ENCODE measurements at regions of chr6 and their contacts with region 1.

Region 1: GRCh38 chr6:33711140-33712129 is at the start of gene UQCC2:
- DNase-seq: peak; percentile 98
- H3K4me3 Mint-ChIP-seq: peak within 1 kb of the TSS; percentile 96
- H3K27ac Mint-ChIP-seq: peak within 1 kb of the TSS; percentile 94
- H3K4me1 Mint-ChIP-seq: peaks cover 26% of the 10 kb centered on the region
- H3K27me3 Mint-ChIP-seq: no peaks in the 10 kb centered on the region
- total RNA-seq, gene UQCC2: 157 to 160 TPM

Region 2: GRCh38 chr6:33288921-33289748 is 422.3 kb before region 1 on chr6 and contains the starts of genes PFDN6 and WDR46:
- CTCF ChIA-PET with region 1: no interaction called
- POLR2A ChIA-PET with region 1: no interaction called
- intact Hi-C with region 1: no loop called
- DNase-seq: peak; percentile 89
- H3K4me3 Mint-ChIP-seq: peak within 1 kb of the TSS; percentile 98
- H3K27ac Mint-ChIP-seq: peak within 1 kb of the TSS; percentile 80
- H3K4me1 Mint-ChIP-seq: peaks cover 41% of the 10 kb centered on the region
- H3K27me3 Mint-ChIP-seq: no peaks in the 10 kb centered on the region
- total RNA-seq, gene PFDN6: 78.5 to 90.9 TPM
- total RNA-seq, gene WDR46: 59.4 to 60.7 TPM

Region 3: DNA sequence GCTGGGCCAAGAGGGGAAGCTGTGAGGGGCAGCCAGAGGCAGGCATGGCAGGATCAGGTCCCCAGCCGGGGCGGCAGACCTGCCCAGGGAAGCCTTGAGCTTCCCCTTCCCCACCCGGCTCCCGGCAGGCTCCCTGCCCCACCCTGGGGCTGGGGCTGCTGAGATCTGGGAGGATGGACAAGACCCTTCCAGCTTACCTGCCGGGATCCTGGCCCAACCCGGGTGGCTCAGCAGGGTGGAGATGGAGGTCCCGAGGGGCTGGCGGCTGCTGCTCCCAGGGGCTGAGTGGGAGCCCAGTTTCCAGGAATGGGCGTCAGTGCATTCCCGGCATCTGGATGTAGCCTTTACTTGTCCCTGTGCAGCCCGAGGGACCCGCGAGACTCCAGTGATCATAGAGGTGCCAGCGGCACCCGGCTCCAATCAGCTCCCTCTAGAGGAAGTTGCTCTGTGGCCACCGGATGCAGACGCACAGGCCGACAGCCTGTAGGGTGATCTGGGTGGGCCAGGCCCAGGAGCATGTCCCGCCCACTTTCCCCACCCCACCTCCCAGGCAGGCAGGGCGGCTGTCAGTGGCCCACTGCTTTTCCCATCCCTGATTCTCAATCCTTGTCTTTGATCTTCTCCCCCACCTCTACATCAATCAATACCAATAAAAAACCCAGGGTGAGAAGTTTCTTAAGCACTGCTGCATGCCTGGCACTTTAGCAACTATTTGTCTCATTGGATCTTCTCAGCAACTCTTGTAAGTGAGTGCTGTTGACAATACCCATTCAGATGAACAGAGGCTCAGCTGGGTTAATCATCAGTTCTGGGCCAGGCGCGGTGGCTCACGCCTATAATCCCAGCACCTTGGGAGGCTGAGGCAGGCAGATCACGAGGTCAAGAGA is 131.4 kb before region 1 on chr6 and contains the start of gene BAK1:
- CTCF ChIA-PET with region 1: interaction called, 15 read pairs
- POLR2A ChIA-PET with region 1: interaction called, 7 read pairs
- intact Hi-C with region 1: no loop called
- DNase-seq: peak; percentile 93
- H3K4me3 Mint-ChIP-seq: peak within 1 kb of the TSS; percentile 96
- H3K27ac Mint-ChIP-seq: peak within 1 kb of the TSS; percentile 98
- H3K4me1 Mint-ChIP-seq: peaks cover 33% of the 10 kb centered on the region
- H3K27me3 Mint-ChIP-seq: no peaks in the 10 kb centered on the region
- total RNA-seq, gene BAK1: 56.3 to 57.7 TPM

Region 4: DNA sequence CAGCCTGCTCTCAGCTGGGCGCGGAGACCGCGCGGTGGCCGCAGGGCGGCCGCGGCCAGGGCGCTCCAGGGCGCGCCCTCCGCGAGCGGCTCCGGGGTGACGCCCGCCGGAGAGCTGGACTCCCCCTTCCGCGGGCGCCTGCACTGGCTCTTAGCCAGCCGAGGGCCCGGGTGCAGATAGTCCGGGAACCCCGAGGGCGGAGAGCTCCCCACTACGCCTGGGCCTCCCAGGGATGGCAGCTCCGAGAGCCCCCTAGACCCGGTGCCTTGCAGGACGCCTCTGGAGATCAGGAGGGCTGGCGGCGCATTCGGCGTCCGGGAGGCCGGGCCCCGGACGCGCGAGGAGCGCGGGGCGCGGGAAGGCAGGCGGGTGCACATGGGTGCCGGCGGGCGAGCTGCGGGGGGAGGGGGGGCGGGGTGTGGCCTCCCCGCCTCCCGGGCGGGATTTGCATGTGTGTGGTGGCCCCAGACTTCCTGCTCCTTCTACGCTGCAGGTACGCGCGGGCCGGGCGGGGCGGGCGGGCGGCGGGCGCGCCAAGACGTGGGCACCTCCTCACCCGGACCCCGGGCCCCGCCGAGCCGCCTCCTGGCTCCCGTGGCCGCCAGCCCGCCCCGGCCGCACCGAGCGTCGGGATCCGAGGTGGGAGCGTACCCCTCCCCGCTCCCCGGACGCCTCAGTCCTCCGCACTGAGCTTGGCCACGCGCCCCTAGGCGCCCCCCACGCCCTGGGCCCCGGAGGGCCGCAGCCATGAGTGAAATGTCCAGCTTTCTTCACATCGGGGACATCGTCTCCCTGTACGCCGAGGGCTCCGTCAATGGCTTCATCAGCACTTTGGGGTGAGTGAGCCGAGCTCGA is 90.4 kb before region 1 on chr6 and contains the start of gene ITPR3:
- CTCF ChIA-PET with region 1: interaction called, 3 read pairs
- POLR2A ChIA-PET with region 1: interaction called, 14 read pairs
- intact Hi-C with region 1: no loop called
- DNase-seq: peak; percentile 85
- H3K4me3 Mint-ChIP-seq: peak within 1 kb of the TSS; percentile 94
- H3K27ac Mint-ChIP-seq: peak within 1 kb of the TSS; percentile 83
- H3K4me1 Mint-ChIP-seq: peaks cover 43% of the 10 kb centered on the region
- H3K27me3 Mint-ChIP-seq: no peaks in the 10 kb centered on the region
- total RNA-seq, gene ITPR3: 41.6 to 45.6 TPM

Region 5: DNA sequence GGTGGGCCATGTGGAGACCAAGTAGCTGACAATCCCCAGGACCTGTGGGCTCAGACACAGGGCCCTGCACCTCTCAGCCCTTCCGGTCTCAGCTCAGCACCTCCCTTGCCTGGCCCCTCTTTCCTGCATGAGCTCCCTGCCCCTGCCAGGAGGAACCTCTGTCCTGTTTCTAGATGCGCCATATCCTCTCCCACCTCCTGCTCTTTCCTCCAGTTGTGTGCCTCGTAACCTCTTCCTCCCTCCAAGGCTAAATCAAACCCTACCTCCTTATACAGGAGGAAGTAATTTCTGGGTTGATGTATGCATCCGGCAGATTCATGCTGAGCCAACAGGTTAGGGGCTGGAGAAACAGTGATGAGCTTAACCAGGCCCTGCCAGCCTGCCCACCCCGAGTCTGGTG is 59.4 kb before region 1 on chr6:
- CTCF ChIA-PET with region 1: no interaction called
- POLR2A ChIA-PET with region 1: no interaction called
- intact Hi-C with region 1: no loop called
- DNase-seq: no peak
- H3K4me3 Mint-ChIP-seq: no peak overlapping the region
- H3K27ac Mint-ChIP-seq: no peak overlapping the region
- H3K4me1 Mint-ChIP-seq: peaks cover 6% of the 10 kb centered on the region
- H3K27me3 Mint-ChIP-seq: no peaks in the 10 kb centered on the region

Region 6: DNA sequence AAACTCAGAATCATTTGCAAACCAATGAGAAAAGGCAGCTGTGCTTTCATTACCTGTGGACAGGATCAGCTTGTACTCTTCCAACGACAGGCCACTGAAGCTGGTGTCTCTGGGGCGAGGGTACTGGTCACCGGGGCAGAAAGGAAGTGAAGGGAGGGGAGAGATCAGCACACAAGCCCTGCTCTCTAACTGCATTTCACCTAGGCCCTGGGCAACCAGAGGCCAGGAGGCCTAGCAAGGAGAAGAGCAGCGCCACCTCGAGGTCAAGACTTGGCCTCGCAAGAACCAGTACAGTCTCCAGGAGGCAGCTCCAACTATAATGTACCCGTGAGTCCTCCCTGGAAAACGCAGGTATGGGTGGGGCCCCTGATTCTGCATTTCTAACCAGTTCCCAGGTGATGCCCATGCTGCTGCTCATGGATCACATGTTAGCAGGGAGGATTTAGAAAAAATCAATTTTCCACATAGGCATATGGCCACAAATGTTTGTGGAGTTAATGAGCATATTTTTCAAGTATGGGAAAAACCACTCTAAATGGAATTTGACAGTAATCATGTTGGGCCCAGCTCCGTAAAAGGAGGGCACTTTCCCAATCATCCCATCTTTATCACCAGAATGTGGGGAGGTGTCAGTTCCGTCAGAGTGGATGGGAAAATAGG is 10.9 kb before region 1 on chr6:
- CTCF ChIA-PET with region 1: interaction called, 37 read pairs
- POLR2A ChIA-PET with region 1: interaction called, 7 read pairs
- intact Hi-C with region 1: no loop called
- DNase-seq: peak; percentile 84
- H3K4me3 Mint-ChIP-seq: no peak overlapping the region
- H3K27ac Mint-ChIP-seq: peak overlapping the region; percentile 73
- H3K4me1 Mint-ChIP-seq: peaks cover 37% of the 10 kb centered on the region
- H3K27me3 Mint-ChIP-seq: no peaks in the 10 kb centered on the region

Region 7: GRCh38 chr6:33771146-33772081 is 60.0 kb after region 1 on chr6:
- CTCF ChIA-PET with region 1: interaction called, 14 read pairs
- POLR2A ChIA-PET with region 1: interaction called, 5 read pairs
- intact Hi-C with region 1: no loop called
- DNase-seq: peak; percentile 70
- H3K4me3 Mint-ChIP-seq: no peak overlapping the region
- H3K27ac Mint-ChIP-seq: no peak overlapping the region
- H3K4me1 Mint-ChIP-seq: no peaks in the 10 kb centered on the region
- H3K27me3 Mint-ChIP-seq: no peaks in the 10 kb centered on the region

Region 8: GRCh38 chr6:34027445-34027936 is 316.1 kb after region 1 on chr6:
- CTCF ChIA-PET with region 1: interaction called, 11 read pairs
- POLR2A ChIA-PET with region 1: no interaction called
- intact Hi-C with region 1: no loop called
- DNase-seq: peak; percentile 65
- H3K4me3 Mint-ChIP-seq: no peak overlapping the region
- H3K27ac Mint-ChIP-seq: no peak overlapping the region
- H3K4me1 Mint-ChIP-seq: no peaks in the 10 kb centered on the region
- H3K27me3 Mint-ChIP-seq: no peaks in the 10 kb centered on the region

Region 9: GRCh38 chr6:34295721-34296120 is 584.3 kb after region 1 on chr6:
- CTCF ChIA-PET with region 1: no interaction called
- POLR2A ChIA-PET with region 1: no interaction called
- intact Hi-C with region 1: no loop called
- DNase-seq: no peak
- H3K4me3 Mint-ChIP-seq: no peak overlapping the region
- H3K27ac Mint-ChIP-seq: peak overlapping the region; percentile 49
- H3K4me1 Mint-ChIP-seq: peaks cover 8% of the 10 kb centered on the region
- H3K27me3 Mint-ChIP-seq: no peaks in the 10 kb centered on the region